ENCODE measurements at regions of chr12 and their contacts with region 1.

Region 1: GRCh38 chr12:120649442-120650232 is 9.2 kb downstream of the CABP1 start:
- DNase-seq: peak; percentile 8
- H3K4me3 ChIP-seq: no peak overlapping the region
- H3K27ac ChIP-seq: no peak overlapping the region
- H3K4me1 ChIP-seq: peaks cover 10% of the 10 kb centered on the region
- H3K27me3 ChIP-seq: peaks cover 35 to 39% of the 10 kb centered on the region in 2 experiments
- CTCF ChIP-seq: no peak
- POLR2A ChIP-seq: no peak

Region 2: DNA sequence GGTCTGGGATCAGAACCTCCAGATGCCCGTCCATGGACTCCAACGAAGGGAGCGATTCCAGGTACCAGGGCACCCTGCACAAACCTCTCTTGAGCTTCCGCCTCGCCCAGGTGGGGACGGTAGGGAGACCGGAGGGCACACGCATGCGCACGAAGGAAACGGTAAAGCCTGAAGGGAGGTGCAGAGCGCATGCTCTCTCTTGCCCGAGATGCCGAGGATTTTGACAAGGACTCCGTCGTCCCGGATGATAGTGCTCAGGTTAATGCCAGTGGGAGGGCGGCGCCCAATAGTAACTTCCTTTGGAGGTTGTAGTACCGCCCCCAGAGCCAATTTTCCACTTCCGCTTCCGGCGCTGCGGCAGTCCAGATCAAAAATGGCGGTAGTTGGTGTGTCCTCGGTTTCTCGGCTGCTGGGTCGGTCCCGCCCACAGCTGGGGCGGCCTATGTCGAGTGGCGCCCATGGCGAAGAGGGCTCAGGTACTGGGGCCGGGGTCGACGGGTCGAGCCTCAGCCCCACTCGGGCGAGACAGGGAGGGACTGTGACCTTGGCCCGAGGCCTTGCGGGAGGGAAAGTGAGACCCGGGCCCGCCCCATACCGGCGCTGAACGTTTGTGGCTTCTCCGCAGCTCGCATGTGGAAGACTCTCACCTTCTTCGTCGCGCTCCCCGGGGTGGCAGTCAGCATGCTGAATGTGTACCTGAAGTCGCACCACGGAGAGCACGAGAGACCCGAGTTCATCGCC is 211.7 kb before region 1 on chr12 and contains the start of gene COX6A1:
- CTCF ChIA-PET with region 1: interaction called, 3 read pairs
- POLR2A ChIA-PET with region 1: no interaction called
- dilution Hi-C with region 1: no loop called
- intact Hi-C with region 1: loop called (anchors 1 kb)
- DNase-seq: peak; percentile 91
- H3K4me3 ChIP-seq: peak within 1 kb of the TSS; percentile 48 to 76 (median 49)
- H3K27ac ChIP-seq: peak within 1 kb of the TSS; percentile 2
- H3K4me1 ChIP-seq: peaks cover 14% of the 10 kb centered on the region
- H3K27me3 ChIP-seq: no peaks in the 10 kb centered on the region
- CTCF ChIP-seq: no peak
- POLR2A ChIP-seq: peak; percentile 93
- total RNA-seq, gene COX6A1: 299 and 302 TPM in 2 replicates

Region 3: DNA sequence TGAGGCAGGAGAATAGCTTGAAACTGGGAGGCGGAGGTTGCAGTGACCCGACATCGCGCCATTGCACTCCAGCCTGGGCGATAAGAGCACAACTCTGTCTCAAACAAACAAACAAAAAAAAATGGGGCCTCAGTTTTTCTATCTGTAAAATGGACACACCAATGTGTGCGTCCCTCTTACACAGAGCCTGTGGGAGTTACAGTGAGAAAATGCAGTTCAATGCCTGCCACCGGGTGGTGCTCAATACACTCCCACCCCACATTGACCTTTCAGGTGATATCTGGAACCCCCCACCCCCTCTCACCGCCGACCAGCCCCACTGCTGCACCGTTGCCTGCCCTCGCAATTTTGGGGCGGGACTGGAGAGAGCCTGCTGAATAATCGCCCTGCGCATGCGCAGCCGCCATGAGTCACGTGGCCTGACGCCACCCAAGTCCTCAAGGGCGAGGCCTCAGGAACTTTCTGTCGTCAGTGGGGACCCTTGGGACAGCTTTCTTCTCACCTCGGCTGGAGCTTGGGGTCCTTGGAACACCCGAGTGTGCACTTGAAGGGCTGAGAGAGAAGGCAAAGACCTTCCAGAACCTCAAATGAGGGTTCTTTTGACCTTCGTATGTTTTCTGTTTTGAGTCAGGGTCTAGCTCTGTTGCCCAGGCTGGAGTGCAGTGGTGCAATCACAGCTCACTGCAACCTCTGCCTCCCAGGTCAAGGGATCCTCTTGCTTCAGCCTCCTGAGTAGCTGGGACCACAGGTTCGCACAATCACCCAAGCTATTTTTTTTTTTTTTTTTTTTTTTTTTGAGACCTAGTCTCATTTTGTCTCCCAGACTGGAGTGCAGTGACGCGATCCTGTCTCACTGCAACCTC is 23.8 kb before region 1 on chr12:
- CTCF ChIA-PET with region 1: interaction called, 11 read pairs
- POLR2A ChIA-PET with region 1: interaction called, 7 read pairs
- dilution Hi-C with region 1: no loop called
- intact Hi-C with region 1: no loop called
- DNase-seq: no peak
- H3K4me3 ChIP-seq: no peak overlapping the region
- H3K27ac ChIP-seq: no peak overlapping the region
- H3K4me1 ChIP-seq: no peaks in the 10 kb centered on the region
- H3K27me3 ChIP-seq: peaks cover 0 to 3% of the 10 kb centered on the region in 2 experiments
- CTCF ChIP-seq: peak in 1 of 2 donors; percentile 28
- POLR2A ChIP-seq: no peak

Region 4: DNA sequence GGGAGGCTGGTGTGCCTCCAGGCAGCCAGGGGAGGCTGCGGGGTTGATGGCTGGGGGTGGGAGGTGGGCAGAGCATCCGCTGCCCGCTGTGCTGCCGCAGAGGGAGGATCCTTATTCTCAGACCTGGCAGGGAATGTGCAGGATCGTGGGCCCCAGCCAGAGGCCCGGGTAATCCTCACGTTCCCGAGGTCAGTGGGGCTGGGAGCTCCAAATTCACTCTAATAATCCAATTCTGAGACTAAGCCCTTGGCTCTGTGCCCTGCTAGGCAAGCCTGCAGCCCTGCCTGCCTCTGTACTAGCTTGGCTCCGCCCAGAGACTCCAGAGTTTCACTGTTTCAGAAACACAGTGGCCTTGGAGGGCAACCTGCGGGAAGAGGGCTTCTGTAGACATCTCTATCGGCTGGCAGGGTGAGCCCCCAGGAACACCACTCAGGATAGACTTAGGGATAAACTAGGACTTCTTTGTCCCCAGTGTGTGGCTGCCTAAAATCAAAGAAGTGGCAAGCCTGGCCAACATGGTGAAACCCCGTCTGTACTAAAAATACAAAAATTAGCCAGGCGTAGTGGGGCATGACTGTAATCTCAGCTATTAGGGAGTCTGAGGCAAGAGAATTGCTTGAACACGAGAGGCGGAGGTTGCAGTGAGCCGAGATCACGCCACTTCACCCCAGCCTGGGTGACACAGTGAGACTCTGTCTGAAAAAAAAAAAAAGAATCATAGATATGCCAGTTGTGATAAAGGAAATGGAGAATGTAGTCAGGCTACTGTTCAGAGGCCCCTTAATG is 19.6 kb after region 1 on chr12:
- CTCF ChIA-PET with region 1: interaction called, 24 read pairs
- POLR2A ChIA-PET with region 1: no interaction called
- dilution Hi-C with region 1: no loop called
- intact Hi-C with region 1: no loop called
- DNase-seq: no peak
- H3K4me3 ChIP-seq: no peak overlapping the region
- H3K27ac ChIP-seq: no peak overlapping the region
- H3K4me1 ChIP-seq: no peaks in the 10 kb centered on the region
- H3K27me3 ChIP-seq: no peaks in the 10 kb centered on the region
- CTCF ChIP-seq: no peak
- POLR2A ChIP-seq: no peak

Region 5: DNA sequence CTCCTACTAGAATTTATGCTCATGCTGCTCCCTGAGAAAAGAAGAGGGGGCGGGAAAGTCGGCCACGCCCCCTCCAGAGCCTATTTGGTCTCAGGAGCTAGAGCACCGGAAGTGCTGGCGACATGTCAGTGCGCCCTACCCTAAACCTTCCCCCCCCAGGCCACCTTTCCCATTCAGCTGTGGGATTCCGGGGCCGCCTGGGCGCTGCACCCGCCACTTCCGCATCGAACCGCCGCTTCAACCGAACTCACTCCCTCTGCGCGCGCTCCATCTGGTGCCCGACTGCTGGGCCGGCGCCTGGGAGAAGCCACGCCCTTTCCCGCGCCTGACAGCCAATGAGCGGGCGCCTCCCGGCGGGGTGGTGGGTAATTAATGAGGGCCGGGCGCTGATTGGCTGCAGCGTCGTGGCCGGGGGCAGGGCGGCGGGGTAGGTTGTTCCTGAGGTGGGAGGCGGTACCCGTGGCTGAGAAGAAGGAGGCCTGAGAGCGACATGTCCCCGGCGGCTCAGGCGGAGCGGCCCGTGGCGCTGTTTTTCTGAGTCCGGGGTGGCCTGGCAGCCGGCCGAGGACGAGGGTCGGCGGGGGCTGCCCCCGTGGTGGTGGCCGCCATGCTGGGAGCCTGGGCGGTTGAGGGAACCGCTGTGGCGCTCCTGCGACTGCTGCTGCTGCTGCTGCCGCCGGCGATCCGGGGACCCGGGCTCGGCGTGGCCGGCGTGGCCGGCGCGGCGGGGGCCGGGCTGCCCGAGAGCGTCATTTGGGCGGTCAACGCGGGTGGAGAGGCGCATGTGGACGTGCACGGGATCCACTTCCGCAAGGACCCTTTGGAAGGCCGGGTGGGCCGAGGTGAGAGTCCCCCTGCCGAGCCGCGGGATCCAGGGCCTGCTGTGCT is 37.3 kb after region 1 on chr12 and contains the start of gene MLEC:
- CTCF ChIA-PET with region 1: interaction called, 24 read pairs
- POLR2A ChIA-PET with region 1: no interaction called
- dilution Hi-C with region 1: no loop called
- intact Hi-C with region 1: loop called (anchors 1 kb)
- DNase-seq: peak; percentile 97
- H3K4me3 ChIP-seq: peak within 1 kb of the TSS; percentile 77 to 88 (median 80)
- H3K27ac ChIP-seq: peak within 1 kb of the TSS; percentile 86
- H3K4me1 ChIP-seq: peaks cover 27% of the 10 kb centered on the region
- H3K27me3 ChIP-seq: no peaks in the 10 kb centered on the region
- CTCF ChIP-seq: no peak
- POLR2A ChIP-seq: peak; percentile 72
- total RNA-seq, gene MLEC: 132 and 144 TPM in 2 replicates

Region 6: DNA sequence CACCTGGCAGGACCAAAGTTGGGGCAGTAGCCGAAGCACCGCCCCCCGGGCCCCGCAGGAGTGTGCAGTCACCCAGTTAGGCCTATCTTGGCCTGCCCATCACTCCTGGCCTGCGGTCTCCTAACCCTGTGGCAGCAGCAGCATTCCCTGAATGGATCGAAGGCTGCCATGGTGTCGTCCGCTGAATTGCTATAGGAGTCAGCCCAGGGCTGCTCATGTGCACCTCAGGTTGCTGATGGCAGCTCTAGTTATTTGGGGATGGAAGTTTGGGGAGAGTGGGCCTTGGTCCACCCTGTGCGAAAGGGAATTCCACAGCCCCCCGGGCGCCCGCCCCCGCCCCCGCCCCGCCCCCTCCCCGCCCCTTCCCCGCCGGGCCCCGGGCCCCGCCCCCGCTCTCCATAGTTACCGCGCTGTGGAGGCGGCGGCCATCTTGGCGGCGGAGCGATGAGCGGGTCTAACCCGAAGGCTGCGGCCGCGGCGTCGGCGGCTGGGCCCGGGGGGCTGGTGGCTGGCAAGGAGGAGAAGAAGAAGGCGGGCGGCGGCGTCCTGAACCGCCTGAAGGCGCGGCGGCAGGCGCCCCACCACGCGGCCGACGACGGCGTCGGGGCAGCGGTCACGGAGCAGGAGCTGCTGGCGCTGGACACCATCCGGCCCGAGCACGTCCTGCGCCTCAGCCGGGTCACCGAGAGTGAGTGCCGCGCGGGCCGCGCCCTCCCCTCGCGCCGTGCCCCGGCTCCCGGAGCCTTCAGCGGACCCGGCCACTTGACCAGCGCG is 60.6 kb after region 1 on chr12 and contains the start of gene UNC119B:
- CTCF ChIA-PET with region 1: interaction called, 63 read pairs
- POLR2A ChIA-PET with region 1: no interaction called
- dilution Hi-C with region 1: no loop called
- intact Hi-C with region 1: loop called (anchors 1 kb)
- DNase-seq: peak; percentile 74
- H3K4me3 ChIP-seq: peak within 1 kb of the TSS; percentile 52 to 66 (median 56)
- H3K27ac ChIP-seq: peak within 1 kb of the TSS; percentile 37
- H3K4me1 ChIP-seq: peaks cover 13% of the 10 kb centered on the region
- H3K27me3 ChIP-seq: no peaks in the 10 kb centered on the region
- CTCF ChIP-seq: no peak
- POLR2A ChIP-seq: peak; percentile 69
- total RNA-seq, gene UNC119B: 26.8 and 33.7 TPM in 2 replicates

Measured in endothelial cell of umbilical vein (primary cell).